Pancreas (tissue), 10 donors: ENCODE measurements at regions of chr7 and their contacts with region 1.

Region 1: GRCh38 chr7:111771638-111772037 is 209.3 kb upstream of the IMMP2L start:
- DNase-seq: no peak
- ATAC-seq: no peak
- H3K4me3 ChIP-seq: no peak overlapping the region
- H3K27ac ChIP-seq: no peak overlapping the region
- H3K4me1 ChIP-seq: no peaks in the 10 kb centered on the region
- H3K27me3 ChIP-seq: no peaks in the 10 kb centered on the region
- CTCF ChIP-seq: no peak

Region 2: GRCh38 chr7:111841596-111842205 is 70.1 kb after region 1 on chr7:
- intact Hi-C with region 1: loop called in 1 of 3 experiments (anchors 10 kb)
- DNase-seq: no peak
- ATAC-seq: no peak
- H3K4me3 ChIP-seq: no peak overlapping the region
- H3K27ac ChIP-seq: no peak overlapping the region
- H3K4me1 ChIP-seq: no peaks in the 10 kb centered on the region
- H3K27me3 ChIP-seq: no peaks in the 10 kb centered on the region
- CTCF ChIP-seq: no peak

Region 3: DNA sequence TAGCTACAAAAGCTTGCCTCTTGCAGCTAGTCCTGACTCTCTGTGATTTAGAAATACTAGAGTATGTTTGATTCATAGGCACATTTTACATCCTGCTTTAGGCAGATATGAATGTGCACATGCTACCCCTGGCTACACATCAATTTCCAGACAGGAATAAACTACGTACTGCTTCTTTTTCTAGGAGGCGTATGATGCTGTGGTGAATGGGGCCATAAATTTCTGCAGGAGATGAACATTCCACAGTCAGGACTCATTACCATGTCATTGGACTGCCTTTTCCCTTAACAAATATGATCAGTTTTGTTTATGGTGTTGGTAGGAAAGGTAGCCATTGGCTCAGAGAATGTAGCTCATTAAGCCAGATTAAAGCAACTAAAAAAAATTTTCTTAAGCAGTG is 628.5 kb after region 1 on chr7:
- intact Hi-C with region 1: loop called in 1 of 3 experiments (anchors 10 kb)
- DNase-seq: no peak
- ATAC-seq: no peak
- H3K4me3 ChIP-seq: no peak overlapping the region
- H3K27ac ChIP-seq: no peak overlapping the region
- H3K4me1 ChIP-seq: no peaks in the 10 kb centered on the region
- H3K27me3 ChIP-seq: no peaks in the 10 kb centered on the region
- CTCF ChIP-seq: no peak